Right ventricle myocardium inferior (tissue), 1 donor: ENCODE measurements at regions of chr10 and their contacts with region 1.

Region 1: DNA sequence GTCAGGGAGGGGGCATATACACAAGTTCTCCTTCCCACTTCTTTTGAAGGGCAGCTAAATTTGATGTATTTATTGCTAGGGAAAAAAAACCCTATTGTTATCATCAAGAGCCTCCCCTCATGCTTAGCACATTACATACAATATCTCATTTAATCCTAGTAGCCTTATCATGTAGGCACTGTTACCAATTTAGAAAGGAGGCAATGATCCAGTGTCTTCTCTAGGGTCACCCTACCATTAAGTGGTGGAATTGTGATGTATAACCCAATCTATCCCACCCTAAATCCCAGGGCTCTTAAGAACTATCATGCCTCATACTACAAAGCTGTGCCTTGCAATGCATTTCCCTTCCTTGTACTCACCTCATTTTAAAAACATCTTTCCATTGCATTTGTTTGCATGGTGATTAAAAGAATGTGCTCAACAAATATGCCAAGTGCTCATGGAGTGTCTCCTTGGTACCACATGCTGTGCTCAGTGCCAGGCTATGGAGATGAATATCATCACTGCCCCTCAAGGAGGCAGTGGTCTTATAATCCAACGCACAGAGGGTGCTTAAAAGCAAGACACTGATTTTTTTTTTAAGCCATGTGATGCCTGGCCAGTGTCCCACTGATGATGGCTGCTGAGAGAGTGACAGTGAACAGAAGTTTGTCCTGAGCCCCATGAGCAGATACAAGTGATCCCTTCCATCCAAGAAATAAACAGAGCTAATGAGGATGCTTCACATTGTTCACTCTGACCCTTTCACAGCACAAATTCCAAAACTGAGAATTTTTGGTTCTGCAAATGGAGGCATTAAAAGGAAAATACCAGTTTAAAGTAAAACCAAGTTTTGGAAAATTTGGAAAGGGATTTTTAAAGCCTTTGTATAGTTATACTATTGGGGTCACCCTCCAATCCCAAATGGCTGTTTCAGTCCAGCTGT is 98.2 kb downstream of the SORBS1 start:
- DNase-seq: no peak
- ATAC-seq: peak; percentile 30

Region 2: DNA sequence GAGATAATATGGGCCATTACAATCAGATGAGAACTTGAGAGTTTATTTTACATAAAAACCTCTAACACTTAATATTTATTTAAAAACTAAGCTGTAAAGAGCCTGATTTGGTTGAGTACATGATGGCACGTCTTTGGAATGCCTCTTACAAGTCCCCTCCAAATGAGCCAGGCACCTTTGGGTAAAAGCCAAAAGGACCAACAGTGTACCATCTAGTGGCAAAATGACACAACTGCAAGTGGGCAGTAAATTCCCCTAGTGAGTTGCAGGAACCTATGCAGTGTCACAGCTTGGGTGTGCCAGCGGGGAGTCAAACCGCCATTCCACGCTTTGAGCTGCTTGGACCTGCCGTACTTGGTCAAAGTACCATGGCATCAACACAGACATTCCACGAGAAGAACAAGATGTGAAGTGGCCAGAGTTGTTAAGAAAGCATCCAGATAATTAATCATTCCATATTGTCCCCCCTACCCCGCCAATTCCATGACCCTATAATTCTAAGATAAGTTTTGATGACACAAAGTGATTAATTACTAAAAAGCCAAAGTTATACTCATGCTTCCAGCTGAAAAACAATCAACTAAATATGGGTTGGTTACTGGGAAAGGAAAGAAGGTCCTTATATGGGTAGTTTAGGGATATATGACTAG is 17.0 kb before region 1 on chr10:
- intact Hi-C with region 1: loop called (anchors 2 kb)
- DNase-seq: no peak
- ATAC-seq: peak; percentile 55

Region 3: DNA sequence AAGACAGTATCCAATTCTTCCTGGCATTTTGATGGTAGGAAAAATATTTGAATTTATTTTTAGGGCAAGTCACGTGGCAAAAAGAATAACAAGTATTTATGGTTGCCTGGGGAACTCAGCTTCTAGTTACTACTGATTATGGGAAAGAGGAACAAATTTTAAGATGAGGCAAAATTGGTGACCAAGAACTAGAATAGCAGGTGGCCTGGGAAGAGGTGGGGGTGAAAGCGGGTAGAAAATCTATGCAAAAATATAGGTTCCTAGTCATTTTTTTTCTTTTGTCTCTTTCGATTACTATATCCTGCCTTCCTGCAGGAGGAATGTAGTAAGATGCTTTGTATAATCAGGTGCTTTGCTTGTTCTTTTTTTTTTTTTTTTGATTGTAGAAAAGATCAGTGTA is 320.7 kb after region 1 on chr10:
- intact Hi-C with region 1: no loop called
- DNase-seq: no peak
- ATAC-seq: no peak